ENCODE measurements at regions of chr19 and their contacts with region 1.

Region 1: GRCh38 chr19:41308392-41309179 is 1.4 kb upstream of the CCDC97 start:
- DNase-seq: peak; percentile 99
- ATAC-seq: peak; percentile 66
- H3K4me3 Mint-ChIP-seq: peak overlapping the region; percentile 96
- H3K27ac Mint-ChIP-seq: peak overlapping the region; percentile 96
- H3K4me1 Mint-ChIP-seq: peaks cover 21% of the 10 kb centered on the region
- H3K27me3 Mint-ChIP-seq: no peaks in the 10 kb centered on the region
- CTCF ChIP-seq: peak; percentile 98

Region 2: GRCh38 chr19:41294393-41294792 is 14.2 kb before region 1 on chr19:
- CTCF ChIA-PET with region 1: interaction called, 10 read pairs
- POLR2A ChIA-PET with region 1: no interaction called
- DNase-seq: no peak
- ATAC-seq: no peak
- H3K4me3 Mint-ChIP-seq: no peak overlapping the region
- H3K27ac Mint-ChIP-seq: no peak overlapping the region
- H3K4me1 Mint-ChIP-seq: peaks cover 6% of the 10 kb centered on the region
- H3K27me3 Mint-ChIP-seq: no peaks in the 10 kb centered on the region
- CTCF ChIP-seq: no peak

Region 3: GRCh38 chr19:41321600-41322270 is 13.1 kb after region 1 on chr19:
- CTCF ChIA-PET with region 1: interaction called, 16 read pairs
- POLR2A ChIA-PET with region 1: interaction called, 8 read pairs
- DNase-seq: peak; percentile 70
- ATAC-seq: peak; percentile 60
- H3K4me3 Mint-ChIP-seq: no peak overlapping the region
- H3K27ac Mint-ChIP-seq: no peak overlapping the region
- H3K4me1 Mint-ChIP-seq: peaks cover 43% of the 10 kb centered on the region
- H3K27me3 Mint-ChIP-seq: no peaks in the 10 kb centered on the region; the same call in 1 of the 2 replicates
- CTCF ChIP-seq: peak; percentile 37; the same call in 1 of the 2 replicates

Measured in WTC11 (cell line).